ENCODE measurements at regions of chr7 and their contacts with region 1.

Region 1: GRCh38 chr7:111561885-111562732 is at the start of gene IMMP2L:
- DNase-seq: peak; percentile 94
- H3K4me3 ChIP-seq: peak within 1 kb of the TSS; percentile 67 to 92 (median 84)
- H3K27ac ChIP-seq: peak within 1 kb of the TSS; percentile 83 to 94 (median 86)
- H3K4me1 ChIP-seq: peaks cover 7 to 30% (median 28%) of the 10 kb centered on the region in 4 donors
- H3K27me3 ChIP-seq: no peaks in the 10 kb centered on the region
- CTCF ChIP-seq: peak; percentile 24 to 35 (median 31)
- EP300 ChIP-seq: no peak
- POLR2A ChIP-seq: peak; percentile 37
- total RNA-seq, gene IMMP2L: 12.0 to 22.2 (median 17.5) TPM

Region 2: DNA sequence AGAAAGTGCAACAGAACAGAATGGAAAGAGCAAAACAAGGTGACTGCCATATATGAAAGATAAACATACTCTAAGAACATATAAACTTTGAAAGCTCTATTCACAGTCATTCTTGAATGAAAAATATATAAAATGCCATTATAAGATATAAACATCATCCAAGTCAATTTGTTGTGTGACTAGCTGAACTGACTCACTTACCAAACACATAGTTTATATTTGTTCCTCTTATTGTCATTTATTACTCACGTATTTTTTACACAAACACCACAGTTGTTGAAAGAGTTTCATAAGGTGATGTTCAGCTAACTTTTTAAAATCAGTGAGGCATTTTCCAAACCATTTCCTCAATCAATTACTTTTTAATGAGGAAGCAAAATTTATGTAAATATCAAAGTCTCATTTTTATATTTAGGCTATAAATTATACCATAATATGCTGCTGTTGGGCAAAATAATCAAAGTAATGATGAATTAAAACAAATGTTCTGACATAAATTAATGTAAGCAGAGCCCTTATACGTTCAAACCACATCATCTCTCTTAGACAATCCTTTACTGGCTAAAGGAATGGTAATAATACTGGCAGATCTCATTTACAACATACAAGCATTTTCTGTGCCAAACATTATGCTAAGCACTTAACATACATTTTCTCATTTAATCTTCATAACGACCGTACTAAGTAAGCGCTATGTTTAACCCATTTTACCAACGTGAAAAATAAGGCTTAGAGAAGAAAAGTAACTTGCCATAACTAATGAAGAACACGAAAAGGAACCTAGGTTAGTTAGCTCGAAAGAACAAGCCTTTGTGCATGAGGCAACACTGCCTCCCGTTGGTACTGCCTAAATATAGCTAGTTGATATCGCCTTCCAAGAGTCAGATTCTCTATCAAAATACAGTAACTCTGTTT is 463.8 kb before region 1 on chr7:
- intact Hi-C with region 1: loop called (anchors 10 kb)
- DNase-seq: no peak
- H3K4me3 ChIP-seq: no peak overlapping the region
- H3K27ac ChIP-seq: no peak overlapping the region
- H3K4me1 ChIP-seq: peaks cover 0 to 17% (median 8%) of the 10 kb centered on the region in 4 donors
- H3K27me3 ChIP-seq: no peaks in the 10 kb centered on the region
- CTCF ChIP-seq: peak; percentile 45 to 66 (median 53)
- EP300 ChIP-seq: no peak
- POLR2A ChIP-seq: no peak

Region 3: DNA sequence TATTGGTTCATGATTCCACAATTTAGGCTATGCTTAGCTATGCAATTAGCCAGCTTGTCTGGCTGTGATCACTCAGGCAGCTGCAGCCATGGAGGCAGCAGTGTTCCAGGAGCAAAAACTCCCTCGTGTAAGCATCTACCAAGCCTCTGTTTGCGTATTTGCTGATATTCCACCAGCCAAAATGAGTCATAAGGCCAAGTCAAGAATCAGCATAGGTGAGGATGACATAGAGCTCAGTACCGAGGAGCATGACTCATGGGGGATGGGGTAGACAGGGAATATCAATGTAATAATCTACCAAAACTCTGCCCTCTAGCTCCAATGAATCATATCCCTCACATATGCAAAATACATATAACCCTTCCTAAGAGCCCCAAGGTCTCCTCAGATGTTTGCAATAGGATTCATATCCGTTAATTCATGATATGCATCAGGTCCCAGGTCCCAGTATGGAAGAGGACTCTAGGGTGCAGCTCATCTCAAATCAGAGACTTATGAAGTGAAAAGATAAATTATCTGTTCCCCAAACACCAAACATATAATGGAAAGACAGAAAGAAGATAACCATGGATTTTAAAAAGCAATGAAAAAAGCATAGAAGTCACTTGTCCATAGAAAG is 63.0 kb before region 1 on chr7:
- intact Hi-C with region 1: no loop called
- DNase-seq: no peak
- H3K4me3 ChIP-seq: no peak overlapping the region
- H3K27ac ChIP-seq: no peak overlapping the region
- H3K4me1 ChIP-seq: peaks cover 0 to 9% (median 0%) of the 10 kb centered on the region in 4 donors
- H3K27me3 ChIP-seq: no peaks in the 10 kb centered on the region
- CTCF ChIP-seq: no peak
- EP300 ChIP-seq: no peak
- POLR2A ChIP-seq: no peak

Region 4: DNA sequence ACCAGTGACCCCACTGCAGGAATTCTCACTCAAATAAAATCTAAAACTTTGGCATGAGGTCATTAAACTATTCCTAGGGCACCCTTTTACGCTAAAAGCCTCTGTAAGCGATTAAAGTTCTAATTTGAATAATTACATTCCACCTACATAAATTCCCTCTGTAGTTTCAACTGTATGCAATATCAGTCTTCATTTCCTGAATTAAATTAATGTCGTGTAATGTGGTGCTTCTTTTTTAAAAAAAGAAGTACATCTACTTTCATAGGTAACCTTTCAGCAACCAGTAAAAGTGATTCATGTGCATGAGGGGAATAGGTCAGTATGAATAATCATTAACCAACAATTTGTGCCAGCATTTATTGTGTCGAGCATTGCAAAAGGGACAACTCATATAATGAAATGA is 44.6 kb before region 1 on chr7:
- intact Hi-C with region 1: no loop called
- DNase-seq: no peak
- H3K4me3 ChIP-seq: no peak overlapping the region
- H3K27ac ChIP-seq: no peak overlapping the region
- H3K4me1 ChIP-seq: peaks cover 0 to 10% (median 5%) of the 10 kb centered on the region in 4 donors
- H3K27me3 ChIP-seq: no peaks in the 10 kb centered on the region
- CTCF ChIP-seq: no peak
- EP300 ChIP-seq: no peak
- POLR2A ChIP-seq: no peak

Measured in esophagus muscularis mucosa (tissue), 4 donors.